Dorsolateral prefrontal cortex (tissue), 120 donors: ENCODE measurements at regions of chr12 and their contacts with region 1.

Region 1: GRCh38 chr12:7188562-7189397 is 706 bp upstream of the PEX5 start:
- DNase-seq: peak; percentile 59 to 85 (median 82)
- H3K4me3 ChIP-seq: peak overlapping the region; percentile 61 to 98 (median 90)
- H3K27ac ChIP-seq: peak overlapping the region; percentile 80 to 98 (median 94)
- H3K27me3 ChIP-seq: no peaks in the 10 kb centered on the region
- CTCF ChIP-seq: peak; percentile 36 to 81 (median 66)

Region 2: GRCh38 chr12:7142056-7142644 is 46.6 kb before region 1 on chr12:
- intact Hi-C with region 1: loop called in 1 of 2 experiments (anchors 5 kb)
- DNase-seq: peak in 1 of 10 donors; percentile 45
- H3K4me3 ChIP-seq: no peak overlapping the region
- H3K27ac ChIP-seq: no peak overlapping the region
- H3K27me3 ChIP-seq: no peaks in the 10 kb centered on the region
- CTCF ChIP-seq: peak; percentile 25 to 70 (median 58)

Region 3: GRCh38 chr12:8449293-8449945 is 1260.6 kb after region 1 on chr12:
- intact Hi-C with region 1: no loop called
- DNase-seq: no peak
- H3K4me3 ChIP-seq: no peak overlapping the region
- H3K27ac ChIP-seq: no peak overlapping the region
- H3K27me3 ChIP-seq: no peaks in the 10 kb centered on the region
- CTCF ChIP-seq: no peak